Activated CD8-positive, alpha-beta T cell treated with anti-CD3 and anti-CD28 coated beads for 36 hours (primary cell): ENCODE measurements at regions of chr22 and their contacts with region 1.

Region 1: DNA sequence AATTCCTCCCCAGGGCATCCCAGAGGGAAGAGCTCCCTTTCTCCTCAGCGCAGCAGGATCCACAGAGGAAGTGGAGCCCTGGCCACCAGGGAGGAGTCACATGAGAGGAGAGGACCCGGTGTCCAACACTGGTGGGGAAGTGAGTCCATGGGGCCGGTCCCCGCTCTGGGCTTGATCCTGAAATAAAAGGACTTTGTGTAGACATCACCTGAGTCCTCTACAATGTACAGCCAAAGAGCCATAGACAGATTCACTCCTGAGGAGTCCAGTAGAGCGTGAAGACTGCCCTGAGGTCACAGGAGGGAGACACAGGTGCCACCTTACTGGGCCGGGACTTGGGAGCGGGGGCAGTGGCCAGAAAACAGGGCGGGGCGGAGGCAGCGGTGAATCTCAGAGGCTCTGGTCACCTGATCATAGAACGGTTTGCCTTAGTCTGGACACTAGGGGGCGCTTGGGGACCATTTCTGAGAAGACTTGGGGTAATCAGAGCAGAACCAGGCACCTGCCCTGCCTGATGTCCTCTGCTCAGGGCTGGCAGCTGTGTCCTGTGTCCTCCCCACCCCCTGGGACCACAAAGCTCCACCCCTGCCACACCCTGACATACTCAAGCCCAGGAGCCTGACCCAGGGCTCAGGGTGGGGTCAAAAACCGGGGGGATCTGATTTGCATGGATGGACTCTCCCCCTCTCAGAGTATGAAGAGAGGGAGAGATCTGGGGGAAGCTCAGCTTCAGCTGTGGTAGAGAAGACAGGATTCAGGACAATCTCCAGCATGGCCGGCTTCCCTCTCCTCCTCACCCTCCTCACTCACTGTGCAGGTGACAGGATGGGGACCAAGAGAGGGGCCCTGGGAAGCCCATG is 112.7 kb downstream of the VPREB1 start:
- DNase-seq: peak; percentile 89
- ATAC-seq: peak; percentile 96
- H3K4me3 Mint-ChIP-seq: no peak overlapping the region
- H3K27ac Mint-ChIP-seq: no peak overlapping the region
- H3K4me1 Mint-ChIP-seq: no peaks in the 10 kb centered on the region
- H3K27me3 Mint-ChIP-seq: peaks cover 26% of the 10 kb centered on the region
- CTCF ChIP-seq: peak; percentile 42

Region 2: DNA sequence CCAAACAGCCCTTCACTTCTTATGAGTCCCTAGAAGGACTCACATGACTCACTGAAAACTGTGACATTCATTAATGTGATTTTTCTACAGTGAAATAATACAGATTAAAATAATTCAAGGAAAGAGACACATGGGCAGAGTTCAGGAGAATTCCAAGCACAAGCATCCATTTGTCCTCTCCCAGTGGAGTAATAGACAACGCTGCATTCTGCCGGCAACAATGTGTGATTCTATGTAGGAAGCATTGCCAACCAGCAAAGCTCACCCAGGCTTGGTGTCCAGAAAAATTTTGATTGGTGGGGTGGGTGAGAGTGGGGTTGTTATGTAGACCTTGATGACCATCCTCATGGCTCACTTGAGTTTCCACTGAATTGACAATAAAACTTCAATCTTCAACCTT is 11.3 kb after region 1 on chr22:
- CTCF ChIA-PET with region 1: no interaction called
- POLR2A ChIA-PET with region 1: no interaction called
- intact Hi-C with region 1: no loop called
- DNase-seq: no peak
- ATAC-seq: no peak
- H3K4me3 Mint-ChIP-seq: no peak overlapping the region
- H3K27ac Mint-ChIP-seq: no peak overlapping the region
- H3K4me1 Mint-ChIP-seq: no peaks in the 10 kb centered on the region
- H3K27me3 Mint-ChIP-seq: peaks cover 30% of the 10 kb centered on the region
- CTCF ChIP-seq: no peak

Region 3: GRCh38 chr22:22380098-22381030 is 23.1 kb after region 1 on chr22:
- CTCF ChIA-PET with region 1: no interaction called
- POLR2A ChIA-PET with region 1: no interaction called
- intact Hi-C with region 1: no loop called
- DNase-seq: peak; percentile 27
- ATAC-seq: peak; percentile 27
- H3K4me3 Mint-ChIP-seq: no peak overlapping the region
- H3K27ac Mint-ChIP-seq: no peak overlapping the region
- H3K4me1 Mint-ChIP-seq: no peaks in the 10 kb centered on the region
- H3K27me3 Mint-ChIP-seq: peaks cover 28% of the 10 kb centered on the region
- CTCF ChIP-seq: peak; percentile 11

Region 4: DNA sequence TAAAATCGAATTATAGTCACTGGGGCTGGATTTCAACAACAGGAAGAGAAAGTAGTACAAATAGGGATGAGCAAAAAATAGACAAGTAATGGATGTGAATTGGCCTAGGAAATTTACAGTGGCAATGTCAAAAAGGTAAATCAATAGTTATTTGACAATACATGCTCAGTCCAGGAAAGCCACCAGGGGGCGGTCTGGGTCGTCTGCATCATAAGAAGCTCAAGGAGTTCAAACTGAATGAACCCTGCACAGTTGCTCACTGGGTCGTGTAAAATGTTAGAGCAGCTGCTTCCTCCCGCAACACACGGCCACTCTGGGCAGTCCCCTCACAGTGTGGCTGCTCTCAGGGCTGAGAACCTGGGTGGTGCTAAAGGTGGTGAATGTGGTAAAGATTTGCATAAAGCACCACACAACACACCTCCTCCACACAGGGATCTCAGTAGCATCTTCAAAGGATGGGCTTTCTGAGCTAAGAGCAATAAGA is 65.4 kb after region 1 on chr22:
- CTCF ChIA-PET with region 1: interaction called, 12 read pairs
- POLR2A ChIA-PET with region 1: no interaction called
- intact Hi-C with region 1: no loop called
- DNase-seq: peak; percentile 91
- ATAC-seq: peak; percentile 97
- H3K4me3 Mint-ChIP-seq: no peak overlapping the region
- H3K27ac Mint-ChIP-seq: no peak overlapping the region
- H3K4me1 Mint-ChIP-seq: no peaks in the 10 kb centered on the region
- H3K27me3 Mint-ChIP-seq: peaks cover 17% of the 10 kb centered on the region
- CTCF ChIP-seq: peak; percentile 84

Region 5: GRCh38 chr22:22558972-22559603 is 201.8 kb after region 1 on chr22 and contains the start of gene PRAME:
- CTCF ChIA-PET with region 1: no interaction called
- POLR2A ChIA-PET with region 1: no interaction called
- intact Hi-C with region 1: no loop called
- DNase-seq: peak; percentile 93
- ATAC-seq: peak; percentile 99
- H3K4me3 Mint-ChIP-seq: no peak within 1 kb of the TSS
- H3K27ac Mint-ChIP-seq: no peak within 1 kb of the TSS
- H3K4me1 Mint-ChIP-seq: peaks cover 4% of the 10 kb centered on the region
- H3K27me3 Mint-ChIP-seq: peaks cover 1% of the 10 kb centered on the region
- CTCF ChIP-seq: peak; percentile 95
- total RNA-seq, gene PRAME: not detected